ENCODE measurements at regions of chr2 and their contacts with region 1.

Region 1: GRCh38 chr2:27003857-27004256 is 28.9 kb upstream of the TMEM214 start:
- DNase-seq: peak in 2 of 3 donors; percentile 31 to 46
- H3K4me3 ChIP-seq: no peak overlapping the region
- H3K27ac ChIP-seq: no peak overlapping the region
- H3K4me1 ChIP-seq: peaks cover 0 to 6% (median 2%) of the 10 kb centered on the region in 4 experiments
- H3K27me3 ChIP-seq: peaks cover 0 to 3% (median 0%) of the 10 kb centered on the region in 5 experiments

Region 2: GRCh38 chr2:26942543-26943295 is 61.1 kb before region 1 on chr2:
- CTCF ChIA-PET with region 1: no interaction called
- POLR2A ChIA-PET with region 1: no interaction called
- DNase-seq: peak; percentile 54 to 79 (median 71)
- H3K4me3 ChIP-seq: no peak overlapping the region
- H3K27ac ChIP-seq: no peak overlapping the region
- H3K4me1 ChIP-seq: peaks cover 0 to 3% (median 0%) of the 10 kb centered on the region in 4 experiments
- H3K27me3 ChIP-seq: peaks cover 0 to 8% (median 3%) of the 10 kb centered on the region in 5 experiments

Region 3: DNA sequence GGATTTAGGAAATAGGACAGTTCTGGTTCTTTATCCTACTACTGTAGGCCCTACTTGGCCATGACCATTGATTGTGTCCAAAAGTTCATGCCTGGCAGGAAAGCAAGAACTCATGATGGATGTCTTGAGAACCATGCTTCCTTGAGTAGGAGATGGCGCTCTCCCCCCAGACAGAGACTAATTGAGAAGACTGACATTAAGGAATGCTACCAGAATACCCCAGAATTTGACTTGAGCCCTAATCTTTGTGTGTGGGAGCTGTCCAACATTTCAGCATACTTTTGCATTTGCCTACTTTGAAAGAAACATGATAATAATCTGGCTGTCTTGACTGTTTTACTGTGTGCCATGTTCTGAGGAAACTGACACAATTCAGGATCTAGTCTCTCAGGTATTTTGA is 10.1 kb before region 1 on chr2:
- CTCF ChIA-PET with region 1: interaction called, 11 read pairs
- POLR2A ChIA-PET with region 1: no interaction called
- DNase-seq: peak in 2 of 3 donors; percentile 44 to 46
- H3K4me3 ChIP-seq: no peak overlapping the region
- H3K27ac ChIP-seq: no peak overlapping the region
- H3K4me1 ChIP-seq: no peaks in the 10 kb centered on the region
- H3K27me3 ChIP-seq: peaks cover 0 to 4% (median 0%) of the 10 kb centered on the region in 5 experiments

Region 4: GRCh38 chr2:27024188-27024587 is 20.3 kb after region 1 on chr2:
- CTCF ChIA-PET with region 1: no interaction called
- POLR2A ChIA-PET with region 1: no interaction called
- DNase-seq: no peak
- H3K4me3 ChIP-seq: no peak overlapping the region
- H3K27ac ChIP-seq: no peak overlapping the region
- H3K4me1 ChIP-seq: no peaks in the 10 kb centered on the region
- H3K27me3 ChIP-seq: no peaks in the 10 kb centered on the region

Measured in common myeloid progenitor, CD34-positive (primary cell).